Heart left ventricle (tissue), 16 donors: ENCODE measurements at regions of chr6 and their contacts with region 1.

Region 1: GRCh38 chr6:5115168-5115567 is 30.0 kb downstream of the PPP1R3G start:
- DNase-seq: peak in 1 of 5 donors; percentile 53
- ATAC-seq: peak in 3 of 4 donors; percentile 50 to 65 (median 61)
- H3K4me3 ChIP-seq: no peak overlapping the region
- H3K27ac ChIP-seq: no peak overlapping the region
- H3K4me1 ChIP-seq: peaks cover 0 to 13% (median 0%) of the 10 kb centered on the region in 12 donors
- H3K27me3 ChIP-seq: no peaks in the 10 kb centered on the region
- CTCF ChIP-seq: peak; percentile 21 to 64 (median 44)
- POLR2A ChIP-seq: no peak

Region 2: DNA sequence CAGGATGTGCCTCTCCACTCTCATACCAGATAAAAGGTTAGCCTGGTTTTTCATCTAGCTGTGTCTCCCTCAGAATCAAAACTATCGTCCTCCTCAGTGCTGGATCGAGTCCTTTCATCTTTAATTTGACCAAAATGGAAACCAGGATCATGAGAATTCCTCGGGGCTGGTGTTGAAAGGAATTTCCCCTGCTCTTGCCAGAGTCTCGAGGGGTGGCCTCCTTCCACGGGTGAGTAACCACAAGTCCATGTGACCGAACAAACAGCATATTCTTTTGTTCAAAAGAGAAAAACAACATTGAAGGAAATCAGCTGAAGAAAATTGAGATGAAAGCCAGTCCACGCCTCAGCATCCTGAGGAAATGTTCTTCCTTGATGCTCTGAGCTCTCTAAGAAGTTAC is 504.9 kb before region 1 on chr6:
- intact Hi-C with region 1: no loop called
- DNase-seq: peak in 4 of 5 donors; percentile 44 to 71 (median 63)
- ATAC-seq: peak in 3 of 4 donors; percentile 53 to 70 (median 59)
- H3K4me3 ChIP-seq: no peak overlapping the region
- H3K27ac ChIP-seq: peak overlapping the region in 1 of 12 donors; percentile 39
- H3K4me1 ChIP-seq: peaks cover 0 to 44% (median 17%) of the 10 kb centered on the region in 12 donors
- H3K27me3 ChIP-seq: no peaks in the 10 kb centered on the region
- CTCF ChIP-seq: no peak
- POLR2A ChIP-seq: no peak

Region 3: GRCh38 chr6:5003604-5004372 is 111.4 kb before region 1 on chr6 and contains the start of gene RPP40:
- intact Hi-C with region 1: loop called in 1 of 10 experiments (anchors 10 kb)
- DNase-seq: peak; percentile 97 to 99 (median 97)
- ATAC-seq: peak; percentile 98 to 100 (median 100)
- H3K4me3 ChIP-seq: peak within 1 kb of the TSS; percentile 34 to 90 (median 70)
- H3K27ac ChIP-seq: peak within 1 kb of the TSS; percentile 60 to 96 (median 89)
- H3K4me1 ChIP-seq: peaks cover 0 to 8% (median 5%) of the 10 kb centered on the region in 12 donors
- H3K27me3 ChIP-seq: no peaks in the 10 kb centered on the region
- CTCF ChIP-seq: peak; percentile 77 to 96 (median 88)
- POLR2A ChIP-seq: peak in 1 of 2 donors; percentile 28
- total RNA-seq, gene RPP40: 1.8 to 7.0 (median 3.5) TPM

Region 4: GRCh38 chr6:5053038-5053437 is 62.1 kb before region 1 on chr6:
- intact Hi-C with region 1: loop called in 2 of 10 experiments (anchors 10 kb)
- DNase-seq: no peak
- ATAC-seq: no peak
- H3K4me3 ChIP-seq: no peak overlapping the region
- H3K27ac ChIP-seq: no peak overlapping the region
- H3K4me1 ChIP-seq: peaks cover 0 to 4% (median 0%) of the 10 kb centered on the region in 12 donors
- H3K27me3 ChIP-seq: no peaks in the 10 kb centered on the region
- CTCF ChIP-seq: no peak
- POLR2A ChIP-seq: no peak

Region 5: GRCh38 chr6:5078121-5078669 is 37.0 kb before region 1 on chr6:
- intact Hi-C with region 1: loop called in 4 of 10 experiments (anchors 1 to 5 kb)
- DNase-seq: no peak
- ATAC-seq: peak in 3 of 4 donors; percentile 67 to 74 (median 68)
- H3K4me3 ChIP-seq: no peak overlapping the region
- H3K27ac ChIP-seq: no peak overlapping the region
- H3K4me1 ChIP-seq: no peaks in the 10 kb centered on the region
- H3K27me3 ChIP-seq: no peaks in the 10 kb centered on the region
- CTCF ChIP-seq: peak in 9 of 12 donors; percentile 15 to 43 (median 31)
- POLR2A ChIP-seq: no peak

Region 6: DNA sequence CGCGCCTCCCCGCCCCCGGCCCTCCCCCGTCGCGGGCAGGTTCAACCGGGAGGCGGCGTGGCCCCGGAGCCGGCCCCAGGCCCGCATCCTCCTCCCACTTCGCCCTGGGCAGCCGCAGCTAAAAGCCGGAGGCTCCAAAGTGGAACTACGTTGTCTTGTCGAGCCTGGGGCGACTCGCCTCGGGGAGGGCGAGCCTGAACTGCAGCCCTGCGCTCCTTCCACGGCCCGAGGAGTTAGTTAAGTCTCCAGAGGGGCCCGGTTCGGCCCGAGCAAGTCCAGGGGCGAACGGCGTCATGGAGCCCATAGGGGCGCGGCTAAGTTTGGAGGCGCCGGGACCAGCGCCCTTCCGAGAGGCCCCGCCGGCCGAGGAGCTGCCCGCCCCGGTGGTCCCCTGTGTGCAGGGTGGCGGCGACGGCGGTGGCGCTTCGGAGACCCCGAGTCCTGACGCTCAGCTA is 29.9 kb before region 1 on chr6 and contains the start of gene PPP1R3G:
- intact Hi-C with region 1: loop called in 2 of 10 experiments (anchors 2 to 5 kb)
- DNase-seq: peak; percentile 57 to 83 (median 60)
- ATAC-seq: peak; percentile 9 to 71 (median 62)
- H3K4me3 ChIP-seq: peak within 1 kb of the TSS; percentile 47 to 81 (median 70)
- H3K27ac ChIP-seq: peak within 1 kb of the TSS; percentile 59 to 94 (median 88)
- H3K4me1 ChIP-seq: peaks cover 0 to 30% (median 14%) of the 10 kb centered on the region in 12 donors
- H3K27me3 ChIP-seq: peaks cover 0 to 28% (median 0%) of the 10 kb centered on the region in 9 donors
- CTCF ChIP-seq: no peak
- POLR2A ChIP-seq: no peak
- total RNA-seq, gene PPP1R3G: 5.8 to 12.3 (median 9.7) TPM